ENCODE measurements at regions of chr18 and their contacts with region 1.

Region 1: GRCh38 chr18:629269-630150 is 27.9 kb upstream of the TYMS start:
- DNase-seq: no peak
- H3K4me3 Mint-ChIP-seq: no peak overlapping the region
- H3K27ac Mint-ChIP-seq: no peak overlapping the region
- H3K4me1 Mint-ChIP-seq: peaks cover 5% of the 10 kb centered on the region
- H3K27me3 Mint-ChIP-seq: peaks cover 21% of the 10 kb centered on the region

Region 2: GRCh38 chr18:457140-457519 is 172.4 kb before region 1 on chr18:
- intact Hi-C with region 1: no loop called
- DNase-seq: no peak
- H3K4me3 Mint-ChIP-seq: no peak overlapping the region
- H3K27ac Mint-ChIP-seq: no peak overlapping the region
- H3K4me1 Mint-ChIP-seq: no peaks in the 10 kb centered on the region
- H3K27me3 Mint-ChIP-seq: no peaks in the 10 kb centered on the region

Region 3: DNA sequence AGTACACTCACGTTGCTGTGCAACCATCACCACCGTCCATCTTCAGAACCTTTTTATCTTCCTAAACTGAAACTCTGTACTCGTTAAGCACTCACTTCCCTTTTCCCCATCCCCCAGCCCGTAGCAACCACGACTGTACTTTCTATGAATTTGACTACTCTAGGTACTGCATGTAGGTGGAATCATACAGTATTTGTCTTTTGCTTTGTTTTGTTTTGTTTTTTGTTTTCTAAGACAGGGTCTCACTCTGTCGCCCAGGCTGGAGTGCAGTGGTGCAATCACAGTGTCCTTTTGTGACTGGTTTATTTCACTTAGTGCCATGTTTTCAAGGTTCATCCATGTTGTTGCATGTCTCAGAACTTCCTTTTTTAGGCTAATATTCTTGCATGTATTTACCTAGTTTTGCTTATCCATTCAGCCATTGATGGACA is 20.9 kb after region 1 on chr18:
- intact Hi-C with region 1: loop called (anchors 2 kb)
- DNase-seq: peak; percentile 47
- H3K4me3 Mint-ChIP-seq: peak overlapping the region; percentile 37
- H3K27ac Mint-ChIP-seq: peak overlapping the region; percentile 24
- H3K4me1 Mint-ChIP-seq: peaks cover 24% of the 10 kb centered on the region
- H3K27me3 Mint-ChIP-seq: no peaks in the 10 kb centered on the region

Region 4: GRCh38 chr18:658001-658946 is 28.8 kb after region 1 on chr18:
- intact Hi-C with region 1: loop called (anchors 2 kb)
- DNase-seq: peak; percentile 75
- H3K4me3 Mint-ChIP-seq: peak overlapping the region; percentile 94
- H3K27ac Mint-ChIP-seq: peak overlapping the region; percentile 94
- H3K4me1 Mint-ChIP-seq: peaks cover 38% of the 10 kb centered on the region
- H3K27me3 Mint-ChIP-seq: no peaks in the 10 kb centered on the region